ENCODE measurements at regions of chr11 and their contacts with region 1.

Region 1: DNA sequence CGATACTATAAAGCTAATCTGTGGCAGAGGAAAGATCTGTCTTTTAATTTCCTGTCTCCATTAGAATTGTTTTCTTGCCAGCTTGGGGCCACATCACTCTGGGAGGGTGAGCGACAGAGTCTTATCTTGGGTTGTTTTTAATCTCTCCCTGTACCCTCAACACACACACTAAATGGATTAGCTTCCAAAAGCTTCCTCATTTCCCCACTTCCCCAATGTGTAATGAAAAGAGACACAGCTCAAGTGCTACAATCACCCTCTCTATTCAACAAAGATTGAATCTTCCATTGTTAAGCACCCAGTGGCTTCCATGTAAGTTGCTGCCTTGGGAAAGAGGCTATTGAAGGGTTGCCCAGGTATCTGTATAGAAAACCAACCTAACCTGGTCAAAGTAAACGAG is 6.1 kb upstream of the ASCL3 start:
- DNase-seq: no peak
- ATAC-seq: no peak
- H3K4me3 Mint-ChIP-seq: no peak overlapping the region
- H3K27ac Mint-ChIP-seq: no peak overlapping the region
- H3K4me1 Mint-ChIP-seq: peaks cover 2% of the 10 kb centered on the region
- H3K27me3 Mint-ChIP-seq: peaks cover 4% of the 10 kb centered on the region

Region 2: GRCh38 chr11:8911029-8911826 is 37.7 kb before region 1 on chr11 and contains the start of gene AKIP1:
- CTCF ChIA-PET with region 1: interaction called, 15 read pairs
- POLR2A ChIA-PET with region 1: no interaction called
- DNase-seq: peak; percentile 88
- ATAC-seq: peak; percentile 82
- H3K4me3 Mint-ChIP-seq: peak within 1 kb of the TSS; percentile 93
- H3K27ac Mint-ChIP-seq: peak within 1 kb of the TSS; percentile 85
- H3K4me1 Mint-ChIP-seq: peaks cover 42% of the 10 kb centered on the region
- H3K27me3 Mint-ChIP-seq: peaks cover 11% of the 10 kb centered on the region
- total RNA-seq, gene AKIP1: 26.8 to 27.2 TPM